Activated CD4-positive, alpha-beta T cell treated with anti-CD3 and anti-CD28 coated beads, Interleukin-2, amount 10 ng/mL, durations not matched to agents 24 days and 14 days (primary cell): ENCODE measurements at regions of chr1 and their contacts with region 1.

Region 1: GRCh38 chr1:205186191-205186590 is 25.3 kb downstream of the DSTYK start:
- DNase-seq: no peak
- H3K4me3 Mint-ChIP-seq: peak overlapping the region; percentile 16
- H3K27ac Mint-ChIP-seq: peak overlapping the region; percentile 63
- H3K4me1 Mint-ChIP-seq: peaks cover 54% of the 10 kb centered on the region
- H3K27me3 Mint-ChIP-seq: no peaks in the 10 kb centered on the region

Region 2: GRCh38 chr1:205172729-205173366 is 13.3 kb before region 1 on chr1:
- intact Hi-C with region 1: loop called (anchors 2 kb)
- DNase-seq: no peak
- H3K4me3 Mint-ChIP-seq: peak overlapping the region; percentile 54
- H3K27ac Mint-ChIP-seq: peak overlapping the region; percentile 79
- H3K4me1 Mint-ChIP-seq: peaks cover 17% of the 10 kb centered on the region
- H3K27me3 Mint-ChIP-seq: no peaks in the 10 kb centered on the region

Region 3: GRCh38 chr1:205199090-205199930 is 13.1 kb after region 1 on chr1:
- intact Hi-C with region 1: loop called (anchors 1 kb)
- DNase-seq: peak; percentile 78
- H3K4me3 Mint-ChIP-seq: peak overlapping the region; percentile 66
- H3K27ac Mint-ChIP-seq: peak overlapping the region; percentile 85
- H3K4me1 Mint-ChIP-seq: peaks cover 50% of the 10 kb centered on the region
- H3K27me3 Mint-ChIP-seq: no peaks in the 10 kb centered on the region

Region 4: GRCh38 chr1:205204552-205204951 is 18.4 kb after region 1 on chr1:
- intact Hi-C with region 1: loop called (anchors 1 kb)
- DNase-seq: no peak
- H3K4me3 Mint-ChIP-seq: peak overlapping the region; percentile 42
- H3K27ac Mint-ChIP-seq: peak overlapping the region; percentile 95
- H3K4me1 Mint-ChIP-seq: peaks cover 45% of the 10 kb centered on the region
- H3K27me3 Mint-ChIP-seq: no peaks in the 10 kb centered on the region